Endothelial cell of umbilical vein (primary cell): ENCODE measurements at regions of chr20 and their contacts with region 1.

Region 1: GRCh38 chr20:22691369-22692118 is 107.2 kb upstream of the FOXA2 start:
- DNase-seq: peak; percentile 82
- H3K4me3 ChIP-seq: peak overlapping the region in 1 of 3 experiments; percentile 4
- H3K27ac ChIP-seq: no peak overlapping the region
- H3K4me1 ChIP-seq: peaks cover 6% of the 10 kb centered on the region
- H3K27me3 ChIP-seq: no peaks in the 10 kb centered on the region
- CTCF ChIP-seq: peak; percentile 83 to 87
- POLR2A ChIP-seq: no peak

Region 2: DNA sequence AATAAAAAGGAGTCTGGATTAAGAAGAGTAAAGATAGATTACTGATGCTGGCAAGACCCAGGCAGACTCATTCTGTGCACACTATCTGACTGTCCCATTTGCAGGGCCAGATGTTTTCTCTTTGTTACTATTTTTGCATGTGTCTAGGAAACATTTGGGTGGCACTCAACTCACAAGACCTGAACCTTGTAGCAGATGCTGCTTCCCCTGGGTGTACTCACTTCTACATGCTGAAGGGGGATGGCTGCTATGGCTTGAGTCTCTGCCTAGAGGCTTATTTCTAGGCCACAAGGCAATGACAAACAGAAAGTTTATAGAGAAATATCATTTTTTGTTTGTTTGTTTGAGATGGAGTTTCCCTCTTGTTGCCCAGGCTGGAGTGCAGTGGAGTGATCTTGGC is 458.6 kb before region 1 on chr20:
- CTCF ChIA-PET with region 1: no interaction called
- POLR2A ChIA-PET with region 1: no interaction called
- dilution Hi-C with region 1: no loop called
- intact Hi-C with region 1: no loop called
- DNase-seq: no peak
- H3K4me3 ChIP-seq: no peak overlapping the region
- H3K27ac ChIP-seq: no peak overlapping the region
- H3K4me1 ChIP-seq: no peaks in the 10 kb centered on the region
- H3K27me3 ChIP-seq: no peaks in the 10 kb centered on the region
- CTCF ChIP-seq: no peak
- POLR2A ChIP-seq: no peak

Region 3: DNA sequence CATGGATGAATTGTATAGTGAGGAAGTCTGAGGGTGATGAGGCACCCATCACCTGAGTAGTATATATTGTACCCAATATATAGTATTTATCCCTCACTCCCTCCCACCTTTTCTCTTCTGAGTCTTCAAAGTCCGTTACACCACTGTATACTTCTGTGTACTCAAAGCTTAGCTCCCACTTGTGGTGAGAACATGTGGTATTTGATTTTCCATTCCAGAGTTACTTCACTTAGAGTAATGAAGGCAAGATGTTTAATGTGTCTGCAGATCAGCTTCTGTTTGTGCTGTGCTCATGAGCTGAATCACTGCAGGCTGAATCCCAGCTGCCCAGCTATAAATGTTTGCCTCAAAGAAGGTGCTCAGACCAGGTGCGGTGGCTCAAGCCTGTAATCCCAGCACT is 32.1 kb after region 1 on chr20:
- CTCF ChIA-PET with region 1: interaction called, 51 read pairs
- POLR2A ChIA-PET with region 1: no interaction called
- dilution Hi-C with region 1: no loop called
- intact Hi-C with region 1: no loop called
- DNase-seq: no peak
- H3K4me3 ChIP-seq: no peak overlapping the region
- H3K27ac ChIP-seq: no peak overlapping the region
- H3K4me1 ChIP-seq: peaks cover 12% of the 10 kb centered on the region
- H3K27me3 ChIP-seq: no peaks in the 10 kb centered on the region
- CTCF ChIP-seq: no peak
- POLR2A ChIP-seq: no peak

Region 4: GRCh38 chr20:22861990-22862389 is 170.4 kb after region 1 on chr20:
- CTCF ChIA-PET with region 1: interaction called, 43 read pairs
- POLR2A ChIA-PET with region 1: no interaction called
- dilution Hi-C with region 1: no loop called
- intact Hi-C with region 1: loop called (anchors 2 kb)
- DNase-seq: peak; percentile 74
- H3K4me3 ChIP-seq: no peak overlapping the region
- H3K27ac ChIP-seq: peak overlapping the region; percentile 78
- H3K4me1 ChIP-seq: peaks cover 33% of the 10 kb centered on the region
- H3K27me3 ChIP-seq: no peaks in the 10 kb centered on the region
- CTCF ChIP-seq: no peak
- POLR2A ChIP-seq: peak; percentile 47

Region 5: GRCh38 chr20:23106261-23106851 is 414.8 kb after region 1 on chr20:
- CTCF ChIA-PET with region 1: interaction called, 12 read pairs
- POLR2A ChIA-PET with region 1: interaction called, 4 read pairs
- dilution Hi-C with region 1: no loop called
- intact Hi-C with region 1: no loop called
- DNase-seq: peak; percentile 93
- H3K4me3 ChIP-seq: no peak overlapping the region
- H3K27ac ChIP-seq: peak overlapping the region; percentile 70
- H3K4me1 ChIP-seq: peaks cover 52% of the 10 kb centered on the region
- H3K27me3 ChIP-seq: no peaks in the 10 kb centered on the region
- CTCF ChIP-seq: peak; percentile 27 to 39
- POLR2A ChIP-seq: peak; percentile 17

Region 6: DNA sequence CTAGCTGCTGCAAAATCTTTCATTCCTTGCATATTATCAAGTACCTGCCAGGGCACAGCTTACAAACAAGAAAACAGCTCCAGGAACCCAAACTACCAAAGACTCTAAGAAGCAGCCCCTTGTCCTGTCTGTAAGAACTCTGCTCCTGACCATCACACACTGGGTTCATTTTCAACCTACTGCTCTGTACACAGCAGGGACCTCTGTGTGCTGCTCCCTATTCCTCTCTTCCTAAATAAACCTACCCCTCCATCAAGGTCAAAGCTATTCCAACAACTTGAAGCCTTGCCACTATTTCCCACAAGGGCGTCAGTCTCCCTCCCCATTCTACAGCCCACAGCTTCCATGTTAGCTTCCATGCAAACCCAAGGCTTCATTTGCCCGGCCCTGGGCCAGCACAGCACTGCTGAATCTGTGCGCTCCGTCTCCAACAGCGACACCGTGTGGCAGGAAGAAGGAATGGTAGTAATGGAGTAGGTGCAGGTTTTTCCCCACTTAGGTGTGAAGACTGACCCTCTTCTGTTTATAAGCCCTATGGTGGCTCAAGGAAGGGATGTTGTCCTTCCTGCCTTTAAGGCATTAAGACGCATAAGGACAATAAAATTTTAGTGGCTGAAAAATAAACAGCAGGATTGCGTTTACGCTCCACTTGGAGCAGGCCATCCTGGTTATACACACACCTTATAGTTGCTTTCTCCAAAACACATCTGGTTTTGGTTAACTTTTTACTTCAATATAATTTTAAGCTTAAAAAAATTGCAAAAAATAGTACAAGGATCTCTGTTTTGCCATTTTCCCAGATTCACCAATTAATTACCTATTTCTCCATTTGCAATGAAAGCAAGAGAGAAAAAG is 543.9 kb after region 1 on chr20:
- CTCF ChIA-PET with region 1: interaction called, 31 read pairs
- POLR2A ChIA-PET with region 1: no interaction called
- dilution Hi-C with region 1: no loop called
- intact Hi-C with region 1: loop called (anchors 1 kb)
- DNase-seq: peak; percentile 72
- H3K4me3 ChIP-seq: no peak overlapping the region
- H3K27ac ChIP-seq: no peak overlapping the region
- H3K4me1 ChIP-seq: peaks cover 5% of the 10 kb centered on the region
- H3K27me3 ChIP-seq: peaks cover 2 to 4% of the 10 kb centered on the region in 2 experiments
- CTCF ChIP-seq: peak; percentile 80 to 85
- POLR2A ChIP-seq: no peak

Region 7: GRCh38 chr20:23340524-23340923 is 649.0 kb after region 1 on chr20:
- CTCF ChIA-PET with region 1: interaction called, 222 read pairs
- POLR2A ChIA-PET with region 1: no interaction called
- dilution Hi-C with region 1: no loop called
- intact Hi-C with region 1: loop called (anchors 1 kb)
- DNase-seq: peak; percentile 84
- H3K4me3 ChIP-seq: no peak overlapping the region
- H3K27ac ChIP-seq: no peak overlapping the region
- H3K4me1 ChIP-seq: no peaks in the 10 kb centered on the region
- H3K27me3 ChIP-seq: peaks cover 2 to 3% of the 10 kb centered on the region in 2 experiments
- CTCF ChIP-seq: peak; percentile 64 to 71
- POLR2A ChIP-seq: no peak